AG04450 (cell line): ENCODE measurements at regions of chr19 and their contacts with region 1.

Region 1: DNA sequence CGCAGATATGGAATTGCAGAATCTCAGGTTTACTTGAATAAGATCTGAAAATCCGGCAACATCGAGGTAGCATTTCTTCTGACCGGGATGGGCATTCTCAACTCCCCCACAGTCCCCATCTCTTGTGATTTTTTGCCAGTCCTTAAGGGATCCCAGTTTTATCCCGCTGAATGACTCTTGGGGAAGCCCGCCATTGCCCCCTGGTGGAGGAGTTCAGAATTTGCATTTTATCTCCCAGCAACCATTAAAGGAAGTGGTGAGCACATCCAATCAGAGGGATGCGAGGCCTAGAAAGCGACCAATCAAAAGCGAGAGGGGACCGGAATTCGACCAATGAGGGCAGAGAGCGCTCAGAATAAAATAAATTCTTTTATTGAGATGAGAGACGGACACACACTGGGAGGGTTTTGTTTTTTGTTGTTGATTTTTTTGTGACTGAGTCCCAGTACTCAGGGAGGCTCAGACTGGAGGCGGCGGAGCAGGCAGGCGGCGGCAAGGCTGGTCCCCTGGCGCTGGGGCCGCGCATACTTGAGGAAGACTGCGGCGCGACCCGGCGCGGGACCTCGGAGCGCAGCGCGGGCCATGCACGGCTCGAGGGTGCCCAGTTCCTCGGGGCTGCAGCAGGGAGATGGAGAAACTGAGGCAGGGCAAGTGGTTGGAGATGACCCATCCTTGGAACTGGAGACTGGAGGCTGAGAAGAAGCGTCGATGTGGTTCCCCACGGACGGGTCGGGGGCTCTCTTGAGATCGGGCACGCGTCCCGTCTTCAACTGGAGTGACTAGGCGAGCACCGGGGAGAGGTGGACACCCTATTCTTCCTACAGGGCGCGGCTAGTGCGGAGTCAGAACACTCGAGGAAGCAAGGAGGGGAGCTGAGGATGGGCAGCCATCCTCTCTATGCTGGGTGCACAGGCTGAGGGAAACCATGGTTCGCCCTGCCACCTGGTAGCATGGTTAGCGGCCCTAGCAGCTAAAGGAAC is 4.0 kb upstream of the TTC9B start:
- DNase-seq: peak; percentile 73
- H3K4me3 ChIP-seq: no peak overlapping the region
- H3K27ac ChIP-seq: no peak overlapping the region
- H3K27me3 ChIP-seq: peaks cover 12% of the 10 kb centered on the region
- CTCF ChIP-seq: peak; percentile 91

Region 2: GRCh38 chr19:40055832-40056504 is 166.2 kb before region 1 on chr19 and contains the start of gene ZNF780B:
- CTCF ChIA-PET with region 1: no interaction called
- POLR2A ChIA-PET with region 1: no interaction called
- DNase-seq: peak; percentile 6
- H3K4me3 ChIP-seq: peak within 1 kb of the TSS; percentile 91
- H3K27ac ChIP-seq: peak within 1 kb of the TSS; percentile 33
- H3K27me3 ChIP-seq: no peaks in the 10 kb centered on the region
- CTCF ChIP-seq: no peak
- polyA plus RNA-seq, gene ZNF780B: 7.2 and 8.3 TPM in 2 replicates

Region 3: GRCh38 chr19:40139533-40140287 is 82.4 kb before region 1 on chr19:
- CTCF ChIA-PET with region 1: interaction called, 20 read pairs
- POLR2A ChIA-PET with region 1: interaction called, 3 read pairs
- DNase-seq: peak; percentile 15
- H3K4me3 ChIP-seq: no peak overlapping the region
- H3K27ac ChIP-seq: no peak overlapping the region
- H3K27me3 ChIP-seq: peaks cover 8% of the 10 kb centered on the region
- CTCF ChIP-seq: peak; percentile 77

Region 4: GRCh38 chr19:40193587-40193849 is 28.6 kb before region 1 on chr19:
- CTCF ChIA-PET with region 1: interaction called, 11 read pairs
- POLR2A ChIA-PET with region 1: no interaction called
- DNase-seq: no peak
- H3K4me3 ChIP-seq: no peak overlapping the region
- H3K27ac ChIP-seq: no peak overlapping the region
- H3K27me3 ChIP-seq: no peaks in the 10 kb centered on the region
- CTCF ChIP-seq: no peak

Region 5: DNA sequence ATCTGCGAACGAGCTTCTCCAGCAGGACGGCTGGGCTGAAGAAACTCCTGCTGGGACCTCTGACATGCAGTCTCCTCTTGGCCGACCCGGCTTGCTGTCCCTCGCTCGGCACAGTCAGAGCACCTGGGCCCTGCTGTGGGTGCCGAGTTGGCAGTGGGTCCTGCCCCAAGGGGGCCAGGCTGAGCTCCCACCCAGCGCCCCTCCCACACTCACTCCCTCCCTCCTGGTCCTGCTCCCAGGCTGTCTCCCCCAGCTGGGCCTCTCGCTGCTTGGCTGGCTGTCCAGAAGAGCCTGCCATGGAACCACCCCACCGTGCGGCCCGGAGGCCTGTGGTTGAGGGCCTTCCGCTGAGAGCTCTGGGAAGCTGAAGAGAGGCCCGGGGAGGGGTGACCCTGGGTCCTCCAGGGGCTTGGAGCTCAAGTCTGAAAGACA is 57.0 kb after region 1 on chr19:
- CTCF ChIA-PET with region 1: no interaction called
- POLR2A ChIA-PET with region 1: no interaction called
- DNase-seq: peak; percentile 8
- H3K4me3 ChIP-seq: peak overlapping the region; percentile 7; the same call in 1 of the 2 replicates
- H3K27ac ChIP-seq: peak overlapping the region; percentile 61
- H3K27me3 ChIP-seq: no peaks in the 10 kb centered on the region
- CTCF ChIP-seq: no peak